ENCODE measurements at regions of chr6 and their contacts with region 1.

Region 1: GRCh38 chr6:52650941-52651340 is 20.0 kb upstream of the TMEM14A start:
- DNase-seq: no peak
- ATAC-seq: no peak

Region 2: DNA sequence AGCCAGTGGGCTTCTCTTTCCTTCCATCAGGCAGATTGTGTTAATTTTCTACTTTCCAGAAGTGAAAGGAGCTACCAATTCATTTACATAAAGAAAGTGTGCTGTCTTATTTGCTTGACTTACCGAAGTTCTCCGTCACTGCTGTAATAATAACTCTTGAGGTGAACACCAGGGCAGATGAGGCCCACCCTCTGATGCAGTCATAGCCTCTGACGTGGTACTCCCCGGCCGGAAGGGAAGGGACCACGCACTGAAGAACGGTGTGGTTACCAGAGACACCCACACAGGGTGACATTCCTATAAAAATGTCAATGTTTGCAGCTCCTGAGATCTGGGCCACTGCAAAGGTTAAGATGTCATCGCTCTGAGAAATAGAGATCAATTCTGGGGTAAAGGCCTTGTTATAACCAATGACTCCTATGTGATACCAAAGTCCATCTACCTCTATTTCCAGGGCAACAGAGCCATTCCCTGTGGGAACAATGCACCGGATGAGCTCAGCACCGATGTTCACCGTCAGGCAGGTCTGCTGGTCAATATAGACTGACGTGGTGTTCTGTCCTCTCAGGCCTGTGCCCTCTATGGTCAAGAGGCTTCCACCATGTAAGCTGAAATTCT is 626.4 kb before region 1 on chr6:
- intact Hi-C with region 1: no loop called
- DNase-seq: no peak
- ATAC-seq: no peak

Region 3: DNA sequence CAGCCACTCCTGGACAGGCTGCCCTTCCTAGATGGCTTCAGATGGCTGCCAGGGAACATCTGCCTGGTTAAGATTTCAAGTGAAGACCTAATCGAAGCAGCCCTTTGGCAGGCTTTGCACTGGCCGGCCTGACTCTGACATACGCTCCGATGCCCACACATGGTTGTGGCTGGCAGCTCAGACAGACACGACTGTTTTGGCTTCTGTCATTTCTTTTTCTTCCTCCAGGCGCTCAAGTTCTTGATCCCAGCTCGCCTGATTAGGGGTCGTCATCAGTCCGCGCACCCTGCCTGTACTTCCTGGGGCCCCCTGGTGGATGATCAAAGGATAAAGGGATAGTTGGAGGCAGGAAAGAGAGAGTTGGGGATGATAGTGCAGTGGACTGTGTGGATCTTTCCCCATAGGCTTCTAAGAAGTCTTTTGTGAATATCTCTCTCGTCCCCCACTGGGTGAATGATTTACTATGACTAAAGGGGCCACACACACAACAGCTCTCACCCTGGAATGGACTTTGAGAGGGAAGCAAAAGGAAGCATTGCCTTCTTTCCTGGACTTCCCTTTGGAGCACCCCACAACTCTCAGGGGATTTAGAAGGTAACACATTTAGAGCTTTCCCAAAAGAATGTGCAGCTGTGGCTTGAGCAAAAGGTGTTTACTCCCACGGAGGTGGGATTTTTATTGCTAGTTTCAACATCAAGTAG is 52.7 kb before region 1 on chr6:
- intact Hi-C with region 1: loop called (anchors 5 kb)
- DNase-seq: peak; percentile 70
- ATAC-seq: peak; percentile 52

Measured in sciatic nerve (tissue), 2 donors.